ENCODE measurements at regions of chr17 and their contacts with region 1.

Region 1: GRCh38 chr17:31740611-31741082 is 118.4 kb downstream of the COPRS start:
- DNase-seq: no peak
- ATAC-seq: no peak
- H3K4me3 ChIP-seq: no peak overlapping the region
- H3K27ac ChIP-seq: peak overlapping the region in 8 of 10 donors; percentile 1 to 79 (median 60)
- H3K4me1 ChIP-seq: peaks cover 7 to 65% (median 48%) of the 10 kb centered on the region in 9 donors
- H3K27me3 ChIP-seq: no peaks in the 10 kb centered on the region
- CTCF ChIP-seq: no peak

Region 2: GRCh38 chr17:31570951-31571892 is 169.4 kb before region 1 on chr17:
- intact Hi-C with region 1: loop called in 1 of 10 experiments (anchors 5 kb)
- DNase-seq: peak; percentile 82 to 86
- ATAC-seq: peak; percentile 65 to 92 (median 87)
- H3K4me3 ChIP-seq: peak overlapping the region in 1 of 10 donors; percentile 1
- H3K27ac ChIP-seq: peak overlapping the region; percentile 38 to 89 (median 76)
- H3K4me1 ChIP-seq: peaks cover 6 to 76% (median 73%) of the 10 kb centered on the region in 9 donors
- H3K27me3 ChIP-seq: no peaks in the 10 kb centered on the region
- CTCF ChIP-seq: no peak

Region 3: DNA sequence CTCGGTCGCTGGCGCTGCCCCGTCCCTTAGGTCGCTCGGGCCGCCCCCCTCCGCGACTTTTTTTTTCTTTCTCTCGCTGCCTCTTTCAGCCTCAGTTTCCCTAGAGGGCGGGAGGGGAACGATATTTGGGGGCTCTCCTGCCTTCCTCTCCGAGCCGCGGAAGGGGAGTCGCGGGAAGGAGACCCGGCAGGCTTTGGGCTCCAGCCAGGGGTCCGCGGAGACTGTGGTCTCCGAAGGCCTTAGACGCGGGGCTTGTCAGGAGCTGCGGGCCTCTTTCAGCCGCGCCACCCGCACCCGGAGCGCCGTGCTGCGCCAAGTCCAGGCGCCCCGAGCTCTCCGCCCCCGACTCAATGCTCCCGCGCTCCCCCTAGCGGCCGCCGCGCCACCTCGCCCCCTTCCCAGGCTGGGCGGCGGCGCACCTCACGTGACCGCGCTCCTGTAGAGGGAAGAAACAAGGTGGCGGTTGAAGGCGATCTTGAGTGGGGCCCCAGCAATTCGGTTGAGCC is 266.4 kb after region 1 on chr17 and contains the start of gene LRRC37B:
- intact Hi-C with region 1: no loop called
- DNase-seq: peak; percentile 87 to 90
- ATAC-seq: peak; percentile 98 to 99 (median 99)
- H3K4me3 ChIP-seq: peak within 1 kb of the TSS; percentile 65 to 85 (median 76)
- H3K27ac ChIP-seq: peak within 1 kb of the TSS in 9 of 10 donors; percentile 75 to 94 (median 85)
- H3K4me1 ChIP-seq: peaks cover 3 to 33% (median 24%) of the 10 kb centered on the region in 9 donors
- H3K27me3 ChIP-seq: no peaks in the 10 kb centered on the region
- CTCF ChIP-seq: peak; percentile 96 to 99 (median 98)
- total RNA-seq, gene LRRC37B: 3.1 to 4.7 (median 3.8) TPM

Measured in heart right ventricle (tissue), 16 donors.